ENCODE measurements at regions of chr16 and their contacts with region 1.

Region 1: GRCh38 chr16:67641779-67642708 is 2.9 kb upstream of the CARMIL2 start:
- DNase-seq: no peak
- ATAC-seq: no peak
- H3K4me3 Mint-ChIP-seq: no peak overlapping the region
- H3K27ac Mint-ChIP-seq: peak overlapping the region in 2 of 10 donors; percentile 4 to 53
- H3K4me1 Mint-ChIP-seq: peaks cover 4 to 21% (median 16%) of the 10 kb centered on the region in 4 donors
- H3K27me3 Mint-ChIP-seq: no peaks in the 10 kb centered on the region

Region 2: DNA sequence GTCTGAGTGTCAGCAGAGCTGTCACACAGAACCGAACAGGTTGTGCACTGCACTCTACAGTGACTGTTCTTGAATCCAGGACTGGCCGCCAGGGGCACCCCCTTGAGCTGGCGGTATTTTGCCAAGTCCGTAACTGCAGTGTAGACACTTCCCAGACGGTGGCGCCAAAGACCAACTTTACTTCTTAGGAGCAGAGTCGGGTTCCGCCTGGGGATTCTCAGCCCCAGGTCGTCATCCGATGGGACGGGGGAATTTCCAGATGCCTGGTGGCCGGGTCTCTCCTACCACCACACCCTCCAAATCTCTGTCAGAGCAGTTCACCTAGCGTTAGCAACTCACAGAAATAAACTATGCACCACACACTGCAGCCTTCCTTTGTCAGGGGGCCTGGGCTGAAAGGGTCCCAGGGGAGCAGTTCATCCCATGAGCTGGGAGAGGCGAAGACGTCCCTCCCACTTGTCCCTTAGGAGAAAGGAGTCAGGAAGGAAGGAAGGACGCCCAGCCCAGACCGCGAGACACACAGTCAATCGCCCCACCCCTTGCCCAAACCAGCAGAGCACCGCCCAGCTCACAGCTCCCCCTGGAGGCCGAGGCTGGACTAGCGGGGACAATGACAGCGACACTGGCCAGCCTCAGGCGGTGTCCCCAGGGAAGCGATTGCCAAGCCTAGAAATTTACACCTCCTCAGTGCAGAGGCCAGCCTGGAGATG is 120.8 kb before region 1 on chr16:
- POLR2A ChIA-PET with region 1: interaction called, 15 read pairs
- DNase-seq: peak; percentile 90 to 98 (median 94)
- ATAC-seq: peak; percentile 88 to 90
- H3K4me3 Mint-ChIP-seq: peak overlapping the region; percentile 86 to 96 (median 92)
- H3K27ac Mint-ChIP-seq: peak overlapping the region; percentile 84 to 99 (median 97)
- H3K4me1 Mint-ChIP-seq: peaks cover 22 to 52% (median 46%) of the 10 kb centered on the region in 4 donors
- H3K27me3 Mint-ChIP-seq: no peaks in the 10 kb centered on the region

Region 3: DNA sequence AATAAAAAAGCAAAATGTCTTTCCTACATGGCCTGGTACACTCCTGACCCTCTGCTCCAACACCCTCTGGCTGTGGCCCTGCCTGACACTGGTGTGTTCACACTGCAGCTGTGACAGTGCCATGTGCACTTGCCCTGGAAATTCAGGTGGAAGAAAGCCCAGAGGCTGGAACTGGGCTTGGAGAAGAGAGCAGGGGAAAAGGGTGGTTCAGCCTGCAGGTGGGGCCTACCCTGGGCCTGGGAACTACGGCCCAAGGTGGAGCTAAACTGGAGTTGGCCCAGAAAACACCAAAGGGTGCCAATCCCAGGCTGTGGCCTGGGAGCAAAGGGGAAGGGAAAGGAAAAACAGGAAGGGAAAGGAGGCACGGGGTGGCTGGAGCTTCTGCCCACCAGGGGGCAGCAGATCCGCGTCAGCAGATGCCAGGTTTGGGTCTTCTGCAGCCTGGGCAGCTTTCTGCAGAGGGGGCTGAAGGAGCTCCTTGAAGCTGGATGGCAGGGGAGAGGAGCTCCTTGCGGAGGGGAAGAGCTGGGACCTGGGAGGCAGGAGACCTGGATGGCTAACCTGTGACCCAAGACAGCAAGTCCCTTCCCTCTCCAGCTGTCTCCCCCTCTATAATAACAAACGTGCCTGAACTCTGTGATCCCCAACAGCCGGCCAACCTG is 95.2 kb before region 1 on chr16:
- POLR2A ChIA-PET with region 1: interaction called, 125 read pairs
- DNase-seq: peak; percentile 58 to 88 (median 74)
- ATAC-seq: peak; percentile 36 to 57
- H3K4me3 Mint-ChIP-seq: peak overlapping the region; percentile 70 to 90 (median 84)
- H3K27ac Mint-ChIP-seq: peak overlapping the region; percentile 81 to 99 (median 96)
- H3K4me1 Mint-ChIP-seq: peaks cover 34 to 71% (median 60%) of the 10 kb centered on the region in 4 donors
- H3K27me3 Mint-ChIP-seq: no peaks in the 10 kb centered on the region

Region 4: DNA sequence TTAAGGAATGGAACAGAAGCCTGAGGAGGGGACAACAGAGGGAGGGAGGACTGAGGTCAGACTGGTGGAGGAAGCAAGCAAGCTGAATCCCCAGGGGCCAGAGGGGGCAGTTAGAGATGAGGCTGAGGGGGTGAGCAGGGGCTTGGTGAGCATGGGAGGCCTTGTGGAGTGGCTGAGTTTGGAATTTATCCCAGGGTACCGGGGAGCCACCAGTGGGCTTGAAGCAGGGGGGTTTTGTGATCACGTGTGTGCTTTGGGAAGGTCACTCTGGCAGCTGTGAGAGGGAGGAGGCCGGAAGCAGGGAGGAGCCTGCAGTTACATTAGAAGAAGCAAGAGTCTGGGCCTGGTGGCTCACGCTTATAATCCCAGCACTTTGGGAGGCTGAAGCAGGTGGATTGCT is 89.6 kb before region 1 on chr16:
- POLR2A ChIA-PET with region 1: interaction called, 125 read pairs
- DNase-seq: no peak
- ATAC-seq: no peak
- H3K4me3 Mint-ChIP-seq: peak overlapping the region in 7 of 10 donors; percentile 44 to 67 (median 60)
- H3K27ac Mint-ChIP-seq: peak overlapping the region; percentile 44 to 97 (median 92)
- H3K4me1 Mint-ChIP-seq: peaks cover 34 to 80% (median 65%) of the 10 kb centered on the region in 4 donors
- H3K27me3 Mint-ChIP-seq: no peaks in the 10 kb centered on the region

Region 5: DNA sequence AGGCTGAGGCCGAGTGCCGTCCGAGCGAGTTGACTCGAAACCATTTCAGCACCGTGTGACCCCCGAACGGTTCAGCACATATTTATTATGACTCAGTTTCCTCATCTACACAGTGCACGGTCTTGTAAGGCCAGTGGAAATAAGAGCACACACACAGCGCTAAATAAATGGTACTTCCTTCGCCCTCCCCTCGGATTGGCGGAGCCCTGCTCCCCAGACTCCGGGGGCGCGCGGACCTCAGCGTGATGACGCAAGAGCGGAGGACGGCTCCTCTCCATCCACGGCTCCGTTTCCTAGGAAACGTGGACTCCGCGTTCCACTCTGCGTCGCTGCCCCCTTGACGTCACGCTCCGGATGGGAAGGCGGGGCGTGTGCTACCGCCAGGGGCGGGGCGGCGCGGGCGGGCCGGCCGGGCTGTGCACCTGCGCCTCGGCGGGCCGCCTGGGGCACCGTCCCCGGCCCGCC is 18.6 kb after region 1 on chr16 and contains the start of gene PARD6A:
- POLR2A ChIA-PET with region 1: interaction called, 82 read pairs
- DNase-seq: peak; percentile 89 to 98 (median 94)
- ATAC-seq: peak; percentile 80 to 83
- H3K4me3 Mint-ChIP-seq: peak within 1 kb of the TSS; percentile 88 to 97 (median 94)
- H3K27ac Mint-ChIP-seq: peak within 1 kb of the TSS; percentile 91 to 99 (median 97)
- H3K4me1 Mint-ChIP-seq: peaks cover 7 to 45% (median 27%) of the 10 kb centered on the region in 4 donors
- H3K27me3 Mint-ChIP-seq: no peaks in the 10 kb centered on the region
- polyA plus RNA-seq, gene PARD6A: 10.6 to 13.3 (median 11.2) TPM

Region 6: GRCh38 chr16:67685388-67686112 is 43.5 kb after region 1 on chr16:
- POLR2A ChIA-PET with region 1: no interaction called
- DNase-seq: peak in 1 of 10 donors; percentile 31
- ATAC-seq: no peak
- H3K4me3 Mint-ChIP-seq: no peak overlapping the region
- H3K27ac Mint-ChIP-seq: no peak overlapping the region
- H3K4me1 Mint-ChIP-seq: peaks cover 0 to 12% (median 0%) of the 10 kb centered on the region in 4 donors
- H3K27me3 Mint-ChIP-seq: no peaks in the 10 kb centered on the region

Region 7: DNA sequence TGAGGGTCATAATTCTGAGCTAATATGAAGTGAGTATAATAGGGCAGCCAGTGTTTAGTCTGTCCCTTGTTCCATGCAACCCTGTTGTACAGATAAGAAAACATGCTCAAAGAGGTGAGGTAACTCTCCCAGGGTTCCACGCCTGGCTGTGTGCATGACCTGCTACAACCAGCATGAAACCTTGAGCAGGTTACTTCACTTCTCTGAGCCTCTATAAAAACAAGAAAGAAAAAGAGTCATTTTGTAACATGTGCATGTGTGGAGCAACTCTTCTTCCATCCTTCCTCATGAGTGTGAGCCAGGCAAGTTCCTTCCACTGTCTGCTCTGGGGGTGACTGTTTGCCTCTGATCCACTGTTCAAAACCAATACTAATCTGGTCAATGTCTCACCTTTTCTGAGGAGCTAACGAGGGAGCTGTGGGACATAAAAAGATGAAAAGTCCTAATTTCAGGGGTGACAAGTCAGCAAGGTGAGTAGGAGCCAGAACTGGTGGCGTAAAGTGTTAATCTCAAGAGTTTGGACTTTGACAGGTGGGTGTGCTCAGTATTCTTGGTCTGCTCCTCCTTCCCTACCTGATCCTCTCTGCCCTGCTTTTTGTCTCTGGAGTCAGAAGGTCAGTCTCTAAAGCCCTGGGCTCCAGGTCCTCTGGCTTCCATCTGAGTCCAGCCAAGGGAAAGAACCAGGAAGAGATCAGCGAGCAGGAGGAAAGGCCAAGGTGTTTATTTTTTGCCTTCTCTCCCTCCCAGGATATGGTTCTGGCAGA is 55.6 kb after region 1 on chr16:
- POLR2A ChIA-PET with region 1: no interaction called
- DNase-seq: no peak
- ATAC-seq: no peak
- H3K4me3 Mint-ChIP-seq: no peak overlapping the region
- H3K27ac Mint-ChIP-seq: no peak overlapping the region
- H3K4me1 Mint-ChIP-seq: peaks cover 0 to 12% (median 3%) of the 10 kb centered on the region in 4 donors
- H3K27me3 Mint-ChIP-seq: no peaks in the 10 kb centered on the region

Measured in naive thymus-derived CD8-positive, alpha-beta T cell (primary cell).